ENCODE measurements at regions of chr12 and their contacts with region 1.

Region 1: DNA sequence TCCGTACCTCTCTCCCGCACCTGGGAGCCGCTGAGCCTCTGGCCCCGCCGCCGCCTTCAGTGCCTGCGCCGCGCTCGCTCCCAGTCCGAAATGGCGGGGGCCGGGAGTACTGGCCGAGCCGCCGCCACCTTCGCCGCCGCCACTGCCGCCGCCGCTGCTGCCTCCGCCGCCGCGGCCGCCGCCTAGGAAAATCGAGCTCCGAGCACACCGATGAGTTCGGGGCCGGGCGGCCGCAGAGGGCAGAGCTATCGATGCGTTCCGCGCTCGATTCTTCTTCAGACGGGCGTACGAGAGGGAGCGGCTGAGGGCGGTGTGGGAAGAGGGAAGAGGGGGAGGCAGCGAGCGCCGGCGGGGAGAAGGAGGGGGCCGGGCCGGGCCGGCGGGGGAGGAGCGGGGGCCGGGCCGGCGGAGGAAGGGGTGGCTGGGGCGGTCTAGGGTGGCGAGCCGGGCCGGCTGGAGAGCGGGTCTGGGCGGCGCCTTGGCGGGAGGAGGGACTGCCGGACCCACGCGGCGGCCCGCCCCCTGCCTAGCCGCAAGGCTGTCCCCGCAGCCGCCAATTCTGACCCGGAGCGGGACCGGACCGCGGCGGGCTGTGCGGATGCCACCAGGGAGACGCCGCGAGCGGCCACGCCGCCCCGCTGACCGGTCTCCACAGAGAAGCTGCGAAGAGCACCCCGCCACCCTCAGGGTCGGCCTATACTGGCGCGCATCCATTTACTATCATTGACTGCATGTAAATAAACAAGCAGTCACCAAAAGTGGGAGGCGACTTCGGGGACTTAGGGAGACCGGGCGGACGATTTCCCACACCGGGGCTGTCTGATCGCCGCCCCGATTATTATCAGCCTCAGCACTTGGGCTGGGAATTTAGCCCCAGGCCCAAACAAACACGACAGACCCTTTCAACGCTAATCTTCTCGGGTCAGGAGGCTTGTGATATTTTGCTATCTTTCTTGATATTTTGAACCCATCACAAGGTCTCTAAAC is at the start of gene KRAS:
- DNase-seq: peak; percentile 82 to 89
- H3K4me3 ChIP-seq: peak within 1 kb of the TSS; percentile 77 to 91 (median 84)
- H3K27ac ChIP-seq: peak within 1 kb of the TSS; percentile 53
- H3K4me1 ChIP-seq: peaks cover 0 to 5% (median 4%) of the 10 kb centered on the region in 4 experiments; a peak in 4 of 7 replicates
- H3K27me3 ChIP-seq: no peaks in the 10 kb centered on the region
- CTCF ChIP-seq: no peak
- EP300 ChIP-seq: peak in 1 of 2 experiments; percentile 90; a peak in 1 of 3 replicates
- POLR2A ChIP-seq: peak; percentile 32 to 58; a peak in 2 of 3 replicates
- RAD21 ChIP-seq: 0 out of 4 replicates have a peak, but pooled peaks of 1 of the 2 experiments have one; percentile 9
- total RNA-seq, gene KRAS: 62.9 and 64.6 TPM in 2 replicates

Region 2: DNA sequence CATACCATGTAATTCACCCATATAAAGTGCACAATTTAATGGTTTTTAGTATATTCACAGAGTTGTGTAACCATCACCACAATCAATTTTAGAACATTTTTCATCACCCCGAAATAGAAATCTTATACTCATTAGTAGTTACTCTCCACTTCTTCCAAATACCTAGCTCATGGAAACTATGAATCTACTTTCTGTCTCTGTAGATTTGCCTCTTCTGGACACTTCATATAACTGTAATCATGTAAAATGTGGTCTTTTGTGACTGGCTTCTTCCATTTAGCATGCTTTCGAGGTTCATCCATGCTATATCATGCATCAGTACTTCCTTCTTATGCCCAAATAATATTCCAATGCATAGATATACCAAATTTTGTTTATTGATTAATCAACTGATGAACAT is 66.9 kb before region 1 on chr12:
- CTCF ChIA-PET with region 1: no interaction called
- POLR2A ChIA-PET with region 1: no interaction called
- DNase-seq: no peak
- H3K4me3 ChIP-seq: no peak overlapping the region
- H3K27ac ChIP-seq: no peak overlapping the region
- H3K4me1 ChIP-seq: no peaks in the 10 kb centered on the region
- H3K27me3 ChIP-seq: no peaks in the 10 kb centered on the region
- CTCF ChIP-seq: no peak
- EP300 ChIP-seq: no peak
- POLR2A ChIP-seq: no peak
- RAD21 ChIP-seq: no peak

Region 3: GRCh38 chr12:25195056-25195971 is 55.7 kb before region 1 on chr12 and contains the starts of genes DNAI7 and ETFRF1:
- CTCF ChIA-PET with region 1: no interaction called
- POLR2A ChIA-PET with region 1: interaction called, 12 read pairs
- DNase-seq: peak; percentile 87 to 99
- H3K4me3 ChIP-seq: peak within 1 kb of the TSS; percentile 81 to 86 (median 83)
- H3K27ac ChIP-seq: peak within 1 kb of the TSS; percentile 89
- H3K4me1 ChIP-seq: peaks cover 0 to 3% (median 0%) of the 10 kb centered on the region in 4 experiments; a peak in 1 of 7 replicates
- H3K27me3 ChIP-seq: no peaks in the 10 kb centered on the region
- CTCF ChIP-seq: no peak
- EP300 ChIP-seq: no peak
- POLR2A ChIP-seq: peak; percentile 65 to 83
- RAD21 ChIP-seq: no peak
- total RNA-seq, gene DNAI7: 0.28 TPM in 1 of 2 replicates, not detected in the other
- total RNA-seq, gene ETFRF1: 7.7 TPM in 2 replicates

Region 4: GRCh38 chr12:25447046-25447445 is 196.0 kb after region 1 on chr12:
- CTCF ChIA-PET with region 1: no interaction called
- POLR2A ChIA-PET with region 1: no interaction called
- DNase-seq: no peak
- H3K4me3 ChIP-seq: no peak overlapping the region
- H3K27ac ChIP-seq: no peak overlapping the region
- H3K4me1 ChIP-seq: no peaks in the 10 kb centered on the region
- H3K27me3 ChIP-seq: no peaks in the 10 kb centered on the region
- CTCF ChIP-seq: no peak
- EP300 ChIP-seq: no peak
- POLR2A ChIP-seq: no peak
- RAD21 ChIP-seq: no peak